Left ventricle myocardium superior (tissue), 1 donor: ENCODE measurements at regions of chr15 and their contacts with region 1.

Region 1: DNA sequence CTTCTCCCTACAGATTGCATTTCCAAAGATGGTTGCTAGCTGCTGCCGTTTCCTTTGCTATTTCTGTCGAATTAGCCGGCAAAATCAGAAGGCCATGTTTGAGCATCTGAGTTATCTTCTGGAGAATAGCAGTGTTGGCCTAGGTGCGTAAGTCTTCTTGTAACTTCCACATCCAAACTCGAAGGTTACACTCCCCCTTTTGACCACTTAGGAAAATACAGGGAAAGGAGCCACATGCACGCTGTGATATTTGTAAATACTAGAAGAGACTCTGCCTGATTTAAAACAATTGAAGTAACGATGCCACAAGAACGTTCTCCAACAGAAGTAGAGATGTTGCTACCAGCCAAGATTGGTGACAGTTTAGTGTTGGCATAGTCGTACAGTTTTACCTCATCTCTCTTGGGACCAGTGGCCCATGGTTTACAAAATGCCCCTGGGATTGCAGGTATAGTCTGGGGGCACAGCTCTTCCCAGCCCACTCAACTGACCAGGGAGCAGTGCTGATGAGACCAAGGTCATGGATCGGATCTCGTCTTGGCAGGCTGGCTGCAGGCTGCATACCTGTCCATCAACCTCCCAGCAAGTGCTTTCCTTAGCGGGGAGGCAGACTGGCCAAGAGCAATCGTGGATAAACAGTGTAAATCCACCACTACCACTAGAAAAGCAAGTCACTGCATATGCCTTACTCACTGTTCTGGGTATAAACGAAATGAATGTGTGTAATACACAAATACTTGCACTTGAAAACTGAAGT is 268.4 kb upstream of the CHRM5 start:
- DNase-seq: no peak
- ATAC-seq: peak; percentile 23

Region 2: DNA sequence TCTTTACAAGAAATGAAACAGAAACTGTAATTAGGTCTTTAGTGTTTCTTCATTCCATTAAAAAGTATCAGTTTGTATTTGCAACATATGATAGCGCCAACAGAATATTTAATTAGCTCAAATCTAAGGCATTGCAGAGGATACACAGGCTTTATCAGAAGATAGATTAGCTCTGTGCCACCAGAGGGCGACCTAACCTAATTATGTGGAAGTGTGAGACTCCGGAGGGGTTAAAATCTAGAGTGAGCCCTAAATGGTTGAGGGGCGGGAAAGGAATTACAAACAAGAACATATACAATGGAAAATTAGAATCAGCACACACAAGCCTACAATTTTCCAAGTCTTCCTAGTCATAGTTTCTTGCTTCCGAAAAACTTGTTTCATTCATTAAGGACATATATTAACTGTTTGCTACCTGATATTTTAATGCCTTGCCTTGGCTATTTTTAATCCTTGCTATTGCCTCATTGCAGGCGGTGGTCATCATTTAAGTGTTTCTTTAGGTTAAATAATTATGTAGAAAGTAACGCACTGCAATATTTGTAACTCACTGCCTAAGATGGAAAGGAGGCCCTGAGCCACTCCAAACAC is 407.1 kb before region 1 on chr15:
- intact Hi-C with region 1: loop called (anchors 10 kb)
- DNase-seq: peak; percentile 42
- ATAC-seq: peak; percentile 71